CD8-positive, alpha-beta memory T cell (primary cell): ENCODE measurements at regions of chr2 and their contacts with region 1.

Region 1: DNA sequence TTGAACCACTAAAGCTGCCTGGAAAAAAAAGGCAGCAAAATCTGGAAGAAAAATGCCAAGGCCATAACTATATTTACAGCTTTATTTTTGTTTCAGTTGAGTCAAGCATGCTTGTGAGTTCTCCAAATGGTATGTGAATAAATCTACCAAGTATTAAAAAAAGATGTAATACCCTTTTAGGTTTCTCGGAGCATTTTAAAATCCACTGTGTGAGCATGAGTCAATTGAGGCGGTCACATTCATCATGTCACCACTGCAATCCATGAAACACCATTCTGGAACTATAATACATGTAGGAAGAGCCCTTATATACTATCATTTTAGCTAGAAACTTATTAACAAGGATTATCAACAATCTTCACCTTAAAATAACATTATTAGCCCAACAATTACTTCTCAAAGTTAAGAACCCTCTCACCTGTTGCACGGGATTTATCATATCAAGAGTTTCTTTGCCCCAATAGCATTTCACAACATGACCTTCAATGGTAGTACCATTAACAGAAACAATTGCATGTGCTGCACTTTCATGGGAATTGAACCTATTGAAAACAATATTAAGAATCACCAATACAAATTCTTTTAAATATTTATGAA is 24.2 kb upstream of the C2orf42 start:
- DNase-seq: no peak
- H3K4me3 ChIP-seq: no peak overlapping the region
- H3K4me3 Mint-ChIP-seq: no peak overlapping the region
- H3K27ac ChIP-seq: no peak overlapping the region
- H3K27ac Mint-ChIP-seq: no peak overlapping the region
- H3K4me1 ChIP-seq: no peaks in the 10 kb centered on the region
- H3K4me1 Mint-ChIP-seq: peaks cover 0 to 11% (median 9%) of the 10 kb centered on the region in 3 donors
- H3K27me3 ChIP-seq: no peaks in the 10 kb centered on the region
- H3K27me3 Mint-ChIP-seq: no peaks in the 10 kb centered on the region

Region 2: DNA sequence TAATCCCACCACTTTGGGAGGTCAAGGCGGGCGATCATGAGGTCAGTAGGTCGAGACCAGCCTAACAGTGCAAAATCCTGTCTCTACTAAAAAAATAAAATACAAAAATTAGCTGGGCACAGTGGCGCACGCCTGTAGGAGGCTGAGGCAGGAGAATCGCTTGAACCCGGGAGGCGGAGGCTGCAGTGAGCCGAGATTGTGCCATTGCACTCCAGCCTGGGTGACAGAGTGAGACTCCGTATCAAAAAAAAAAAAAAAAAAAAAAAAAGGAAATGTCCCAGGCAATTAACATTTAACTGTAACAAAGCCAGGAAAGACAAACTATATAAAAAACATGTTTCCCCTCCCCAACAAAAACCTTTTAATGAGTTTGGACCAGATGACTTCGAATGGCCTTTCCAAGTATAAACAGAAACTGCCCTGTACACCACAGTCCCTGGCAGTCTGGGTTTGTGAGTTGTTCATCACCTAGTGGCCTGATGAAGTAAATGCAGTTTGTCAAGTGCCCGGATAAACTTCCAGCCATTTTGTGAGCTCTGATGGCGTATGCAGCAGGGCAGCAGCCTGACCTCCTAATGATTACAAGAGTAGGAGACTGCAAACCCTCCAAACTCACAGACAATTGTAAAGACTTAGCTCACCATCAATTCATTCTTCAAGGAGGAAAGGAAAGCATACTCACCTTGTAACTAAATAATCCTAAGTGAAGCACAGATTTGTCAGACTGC is 144.3 kb before region 1 on chr2:
- CTCF ChIA-PET with region 1: no interaction called
- POLR2A ChIA-PET with region 1: interaction called, 12 read pairs
- DNase-seq: peak; percentile 30 to 79 (median 74)
- H3K4me3 ChIP-seq: peak overlapping the region; percentile 33
- H3K4me3 Mint-ChIP-seq: peak overlapping the region; percentile 54 to 86 (median 78)
- H3K27ac ChIP-seq: peak overlapping the region; percentile 12
- H3K27ac Mint-ChIP-seq: peak overlapping the region; percentile 87 to 99 (median 98)
- H3K4me1 ChIP-seq: peaks cover 48% of the 10 kb centered on the region
- H3K4me1 Mint-ChIP-seq: peaks cover 41 to 52% (median 47%) of the 10 kb centered on the region in 3 donors
- H3K27me3 ChIP-seq: no peaks in the 10 kb centered on the region
- H3K27me3 Mint-ChIP-seq: no peaks in the 10 kb centered on the region

Region 3: DNA sequence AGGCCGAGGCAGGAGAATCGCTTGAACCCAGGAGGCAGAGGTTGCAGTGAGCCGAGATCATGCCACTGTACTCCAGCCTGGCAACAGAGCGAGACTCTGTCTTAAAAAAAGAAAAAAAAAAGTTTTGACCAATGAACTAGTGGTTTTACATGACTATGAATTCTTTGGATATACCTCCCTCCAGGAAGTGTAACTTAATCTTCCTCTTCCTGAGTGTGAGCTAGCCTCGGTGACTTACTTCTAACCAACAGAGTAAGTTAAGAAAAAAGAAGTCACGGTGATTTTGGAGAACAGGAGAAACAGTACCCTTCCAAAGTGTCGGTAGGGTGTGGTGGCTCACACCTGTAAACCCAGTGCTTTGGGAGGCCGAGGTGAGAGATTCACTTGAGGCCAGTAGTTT is 26.3 kb after region 1 on chr2:
- CTCF ChIA-PET with region 1: no interaction called
- POLR2A ChIA-PET with region 1: no interaction called
- DNase-seq: no peak
- H3K4me3 ChIP-seq: no peak overlapping the region
- H3K4me3 Mint-ChIP-seq: no peak overlapping the region
- H3K27ac ChIP-seq: no peak overlapping the region
- H3K27ac Mint-ChIP-seq: peak overlapping the region in 2 of 8 donors; percentile 4 to 43
- H3K4me1 ChIP-seq: peaks cover 38% of the 10 kb centered on the region
- H3K4me1 Mint-ChIP-seq: peaks cover 47 to 72% (median 63%) of the 10 kb centered on the region in 3 donors
- H3K27me3 ChIP-seq: no peaks in the 10 kb centered on the region
- H3K27me3 Mint-ChIP-seq: no peaks in the 10 kb centered on the region